Left colon (tissue), 2 donors: ENCODE measurements at regions of chr21 and their contacts with region 1.

Region 1: DNA sequence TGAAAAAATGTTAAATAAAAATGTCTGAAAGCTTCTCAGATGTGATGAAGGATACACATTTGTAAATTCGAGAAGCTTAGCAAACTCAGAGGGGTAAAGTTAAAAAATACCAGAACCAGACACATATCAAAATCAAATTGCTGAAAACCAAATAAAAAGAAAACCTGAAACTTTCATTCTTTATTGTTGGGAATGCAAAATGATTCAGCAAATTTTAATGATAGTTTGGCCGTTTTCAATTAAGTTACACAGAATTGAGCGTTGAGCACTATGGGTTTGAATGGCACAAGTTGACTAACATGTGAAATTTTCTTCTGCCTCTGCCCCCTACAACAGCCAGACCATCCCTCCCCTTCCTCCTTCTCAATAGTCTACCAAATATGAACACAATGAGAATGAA is 33.5 kb upstream of the GRIK1 start:
- DNase-seq: no peak
- ATAC-seq: no peak

Region 2: DNA sequence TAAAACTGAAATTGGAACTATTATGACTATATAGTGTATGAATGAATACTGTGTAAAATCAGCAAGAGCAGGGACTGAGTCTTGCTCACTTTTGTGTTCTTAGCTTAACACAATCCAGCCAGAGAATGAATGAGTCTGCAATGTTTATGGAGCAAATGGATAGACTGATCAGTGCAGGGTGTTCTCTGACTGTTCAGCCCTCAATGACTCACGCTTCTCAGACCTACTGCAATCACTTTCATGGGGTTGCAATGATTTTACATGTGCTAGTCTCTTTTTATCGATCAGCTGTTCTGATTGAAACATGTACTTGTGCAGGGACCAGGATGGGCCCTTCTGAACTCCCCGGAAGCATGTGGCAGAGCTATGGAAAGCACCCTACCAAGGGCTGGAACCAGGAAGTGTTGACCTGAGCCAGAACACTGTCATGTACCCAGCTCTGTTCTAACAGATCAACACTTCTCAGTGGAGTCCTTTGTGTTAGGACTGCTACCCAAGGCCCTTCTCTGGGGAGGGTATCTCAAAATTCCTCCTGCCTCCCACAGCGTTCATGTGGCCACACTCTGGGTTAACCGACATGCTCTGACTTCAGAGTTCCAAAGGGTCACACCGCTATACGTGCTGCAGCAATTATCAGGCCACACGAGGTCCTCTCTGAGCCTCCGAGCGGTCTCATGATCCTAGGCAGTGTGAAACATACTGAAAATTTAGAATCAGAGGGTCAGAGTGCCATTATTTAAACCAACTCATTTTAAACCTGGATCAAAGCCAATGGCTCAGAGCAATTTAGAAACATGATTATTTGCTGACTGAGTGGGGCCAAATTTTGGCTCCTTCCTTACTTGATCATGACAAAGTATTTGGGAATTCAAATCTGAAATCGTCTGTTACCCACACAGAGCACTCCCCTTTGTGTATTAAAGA is 68.6 kb before region 1 on chr21:
- intact Hi-C with region 1: loop called in 1 of 2 experiments (anchors 2 kb)
- DNase-seq: no peak
- ATAC-seq: no peak